ENCODE measurements at regions of chr3 and their contacts with region 1.

Region 1: DNA sequence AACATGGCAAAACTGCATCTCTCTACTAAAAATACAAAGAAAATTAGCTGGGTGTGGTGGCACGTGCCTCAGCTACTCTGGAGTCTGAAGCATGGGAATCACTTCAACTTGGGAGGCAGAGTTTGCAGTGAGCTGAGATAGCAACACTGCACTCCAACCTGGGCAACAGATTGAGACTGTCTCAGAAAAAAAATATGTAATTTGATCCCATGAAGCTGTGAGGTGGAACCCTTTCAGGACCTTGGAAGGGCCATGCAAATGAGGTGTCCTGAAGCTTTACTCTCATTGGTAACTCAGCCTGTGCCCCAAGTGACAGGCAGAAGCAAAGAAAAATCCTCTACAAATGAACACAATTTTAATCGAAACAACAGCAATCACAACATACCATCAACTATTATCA is 84.6 kb upstream of the CDV3 start:
- DNase-seq: no peak
- H3K4me3 Mint-ChIP-seq: no peak overlapping the region
- H3K27ac Mint-ChIP-seq: no peak overlapping the region
- H3K4me1 Mint-ChIP-seq: peaks cover 48% of the 10 kb centered on the region
- H3K27me3 Mint-ChIP-seq: peaks cover 3% of the 10 kb centered on the region

Region 2: DNA sequence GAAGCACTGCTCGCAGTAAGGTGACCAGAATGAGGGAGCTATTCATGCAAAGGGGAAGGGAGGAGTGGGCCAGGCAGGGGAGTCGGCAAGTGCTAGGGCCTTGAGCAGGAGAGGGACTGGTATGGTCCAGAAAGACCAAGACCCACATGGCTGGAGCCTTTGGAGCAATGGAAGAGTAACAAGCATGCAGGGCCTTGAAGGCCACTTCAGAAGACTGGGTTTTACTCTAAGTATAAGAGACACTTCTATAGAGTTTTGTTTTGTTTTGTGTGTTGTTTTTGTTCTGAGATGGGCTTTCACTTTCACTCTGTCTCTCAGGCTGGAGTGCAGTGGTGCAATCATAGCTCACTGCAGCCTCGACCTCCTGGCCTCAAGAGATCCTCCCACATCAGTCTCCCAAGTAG is 47.0 kb before region 1 on chr3:
- intact Hi-C with region 1: loop called (anchors 1 kb)
- DNase-seq: peak; percentile 22
- H3K4me3 Mint-ChIP-seq: peak overlapping the region; percentile 81
- H3K27ac Mint-ChIP-seq: peak overlapping the region; percentile 96
- H3K4me1 Mint-ChIP-seq: peaks cover 35% of the 10 kb centered on the region
- H3K27me3 Mint-ChIP-seq: no peaks in the 10 kb centered on the region

Region 3: DNA sequence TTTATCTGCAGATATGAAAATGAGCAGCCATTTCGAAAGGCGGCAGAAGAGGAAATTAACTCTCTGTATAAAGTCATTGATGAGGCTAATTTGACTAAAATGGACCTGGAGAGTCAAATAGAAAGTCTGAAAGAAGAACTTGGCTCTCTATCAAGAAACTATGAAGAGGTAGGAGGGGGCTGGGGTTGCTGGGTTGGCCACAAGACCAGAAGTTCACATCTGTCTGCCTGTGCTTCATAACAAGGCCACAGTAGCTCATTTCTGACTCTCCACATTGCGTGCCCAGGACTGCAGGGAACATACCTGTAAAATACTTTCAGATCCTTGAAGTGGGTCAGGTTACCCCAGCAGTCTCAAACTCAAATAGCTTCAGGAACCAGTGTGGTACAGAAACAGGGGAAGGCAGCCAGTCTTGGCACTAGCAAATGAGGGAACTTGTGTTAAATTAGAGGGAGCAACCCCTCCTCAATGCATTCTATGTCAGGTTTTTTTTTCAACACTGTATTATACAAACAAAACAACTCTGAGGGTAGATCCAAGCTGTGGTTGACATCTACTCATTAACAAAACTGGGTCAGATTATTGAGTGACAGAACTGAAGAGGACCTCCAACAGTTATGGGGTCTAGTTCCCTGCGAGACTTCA is 40.3 kb before region 1 on chr3:
- intact Hi-C with region 1: loop called (anchors 1 kb)
- DNase-seq: peak; percentile 22
- H3K4me3 Mint-ChIP-seq: peak overlapping the region; percentile 34
- H3K27ac Mint-ChIP-seq: peak overlapping the region; percentile 80
- H3K4me1 Mint-ChIP-seq: peaks cover 34% of the 10 kb centered on the region
- H3K27me3 Mint-ChIP-seq: peaks cover 2% of the 10 kb centered on the region

Region 4: DNA sequence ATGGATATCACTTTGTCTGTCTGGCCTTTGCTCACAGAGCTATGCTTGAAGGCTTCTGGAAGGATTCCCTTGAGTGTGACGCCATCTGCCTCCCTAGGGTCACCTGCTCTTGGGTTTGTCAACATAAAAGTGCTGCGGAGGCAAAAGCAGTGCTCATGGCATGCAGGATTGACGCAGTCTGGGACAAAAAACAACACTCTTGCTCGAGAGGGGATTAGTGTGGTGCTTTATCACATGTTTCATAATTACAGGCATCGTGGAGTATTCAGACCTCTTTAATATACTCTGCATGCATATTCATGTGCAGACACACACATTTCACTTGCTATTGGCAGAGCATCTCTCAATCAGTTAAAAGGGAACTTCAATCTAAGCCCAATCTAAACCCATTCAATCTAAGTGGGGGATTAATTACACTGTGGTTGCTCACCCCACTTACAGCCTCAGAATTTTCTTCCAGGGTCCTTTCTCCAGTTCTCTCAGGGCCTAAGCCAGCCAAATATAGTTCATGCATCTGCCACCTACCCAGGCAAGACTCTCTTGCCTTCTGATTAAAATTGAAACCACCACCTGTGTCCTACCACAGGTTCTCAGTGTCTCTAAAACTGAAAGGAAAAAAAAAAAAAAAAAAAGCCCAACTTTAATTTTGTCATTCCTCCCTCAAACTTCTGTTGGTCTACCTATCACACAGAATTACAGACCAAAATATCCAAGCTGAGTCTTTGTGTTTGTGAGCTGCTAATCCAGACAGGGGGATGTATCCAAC is 13.5 kb before region 1 on chr3:
- intact Hi-C with region 1: loop called (anchors 1 kb)
- DNase-seq: peak; percentile 42
- H3K4me3 Mint-ChIP-seq: peak overlapping the region; percentile 59
- H3K27ac Mint-ChIP-seq: peak overlapping the region; percentile 32
- H3K4me1 Mint-ChIP-seq: peaks cover 52% of the 10 kb centered on the region
- H3K27me3 Mint-ChIP-seq: no peaks in the 10 kb centered on the region

Region 5: GRCh38 chr3:133506215-133506901 is 17.4 kb after region 1 on chr3:
- intact Hi-C with region 1: loop called (anchors 1 kb)
- DNase-seq: peak; percentile 37
- H3K4me3 Mint-ChIP-seq: peak overlapping the region; percentile 20
- H3K27ac Mint-ChIP-seq: peak overlapping the region; percentile 70
- H3K4me1 Mint-ChIP-seq: peaks cover 14% of the 10 kb centered on the region
- H3K27me3 Mint-ChIP-seq: no peaks in the 10 kb centered on the region

Region 6: GRCh38 chr3:133595341-133595740 is 106.4 kb after region 1 on chr3:
- intact Hi-C with region 1: loop called (anchors 1 kb)
- DNase-seq: no peak
- H3K4me3 Mint-ChIP-seq: peak overlapping the region; percentile 1
- H3K27ac Mint-ChIP-seq: peak overlapping the region; percentile 20
- H3K4me1 Mint-ChIP-seq: peaks cover 25% of the 10 kb centered on the region
- H3K27me3 Mint-ChIP-seq: no peaks in the 10 kb centered on the region

Region 7: DNA sequence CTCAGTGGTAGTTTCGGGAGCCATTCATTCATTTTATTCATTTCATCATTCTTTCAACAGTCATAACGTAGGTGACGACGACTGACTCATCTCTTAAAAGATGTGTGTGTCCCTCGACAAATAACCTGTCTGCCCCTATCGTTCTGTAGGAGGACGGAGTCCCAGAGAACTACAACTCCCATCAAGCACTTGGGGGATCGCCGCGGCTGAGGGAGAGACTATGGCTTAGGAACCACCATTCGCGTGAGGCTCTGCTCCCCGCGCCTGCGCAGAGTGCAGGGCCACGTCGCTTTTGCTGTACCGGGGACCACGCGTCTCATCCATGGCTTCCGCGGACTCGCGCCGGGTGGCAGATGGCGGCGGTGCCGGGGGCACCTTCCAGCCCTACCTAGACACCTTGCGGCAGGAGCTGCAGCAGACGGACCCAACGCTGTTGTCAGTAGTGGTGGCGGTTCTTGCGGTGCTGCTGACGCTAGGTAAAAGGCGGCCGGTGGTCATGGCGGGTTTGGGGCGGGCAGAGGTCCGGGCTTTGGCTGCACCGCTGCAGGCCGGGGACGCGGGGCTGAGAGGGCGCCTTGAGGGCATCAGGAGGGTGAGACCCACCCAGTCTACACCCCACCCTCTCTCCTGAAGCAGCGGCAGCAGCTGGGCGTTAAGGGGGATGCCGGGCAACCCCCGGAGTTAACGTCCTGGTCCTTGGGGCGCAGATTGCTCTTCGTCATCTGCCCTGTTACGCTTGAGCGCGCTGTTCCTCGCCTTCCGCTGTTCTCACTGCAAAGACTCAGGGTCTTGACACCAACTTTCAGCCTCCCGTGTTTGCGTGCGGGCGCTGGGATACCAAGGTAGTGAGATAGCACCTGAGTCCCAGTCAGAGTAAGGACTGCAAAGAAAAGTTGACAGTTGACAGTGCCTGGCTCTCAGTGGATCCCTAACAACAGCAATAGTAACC is 316.9 kb after region 1 on chr3 and contains the start of gene SRPRB:
- intact Hi-C with region 1: loop called (anchors 1 kb)
- DNase-seq: peak; percentile 95
- H3K4me3 Mint-ChIP-seq: peak within 1 kb of the TSS; percentile 99
- H3K27ac Mint-ChIP-seq: peak within 1 kb of the TSS; percentile 95
- H3K4me1 Mint-ChIP-seq: peaks cover 28% of the 10 kb centered on the region
- H3K27me3 Mint-ChIP-seq: peaks cover 7% of the 10 kb centered on the region
- total RNA-seq, gene SRPRB: 108 and 115 TPM in 2 replicates

Measured in activated T-helper 1 cell treated with anti-CD3 and anti-CD28 coated beads, Interleukin-12 subunit alpha, Interleukin-12 subunit beta, Interleukin-2, Interleukin-4 antibody, amounts not matched to agents 30 ng/mL and 10 ng/mL and 1 ng/mL, durations not matched to agents 14 hours and 24 hours and 36 hours (primary cell).